Astrocyte of the cerebellum (primary cell): ENCODE measurements at regions of chr17 and their contacts with region 1.

Region 1: DNA sequence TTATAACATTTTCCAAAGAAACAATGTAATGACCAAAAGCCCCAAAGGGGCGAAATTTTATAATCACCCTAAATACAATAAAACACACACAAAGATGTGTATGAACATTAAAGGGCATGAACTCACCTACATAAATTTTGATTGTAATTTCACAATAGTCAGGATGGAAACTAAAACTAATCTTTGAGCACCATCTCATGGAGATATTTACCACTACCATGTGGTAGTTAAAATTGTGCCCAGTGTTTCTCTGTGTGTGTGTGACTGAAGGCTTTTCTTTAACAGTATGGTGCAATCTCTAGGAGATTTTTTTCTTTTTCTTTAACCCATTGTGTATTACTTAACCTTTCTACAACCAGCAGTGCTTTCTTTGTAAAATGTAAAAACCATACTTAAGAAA is 19.7 kb upstream of the MEIOC start:
- DNase-seq: peak; percentile 28
- H3K4me3 ChIP-seq: no peak overlapping the region
- CTCF ChIP-seq: peak; percentile 37

Region 2: GRCh38 chr17:44363613-44364159 is 272.9 kb before region 1 on chr17 and contains the start of gene FAM171A2:
- in situ Hi-C with region 1: loop called (anchors 25 kb)
- DNase-seq: peak; percentile 22
- H3K4me3 ChIP-seq: peak within 1 kb of the TSS; percentile 80
- CTCF ChIP-seq: no peak

Region 3: GRCh38 chr17:44533533-44534246 is 102.9 kb before region 1 on chr17:
- in situ Hi-C with region 1: loop called (anchors 5 kb)
- DNase-seq: peak; percentile 72
- H3K4me3 ChIP-seq: no peak overlapping the region
- CTCF ChIP-seq: peak; percentile 92

Region 4: DNA sequence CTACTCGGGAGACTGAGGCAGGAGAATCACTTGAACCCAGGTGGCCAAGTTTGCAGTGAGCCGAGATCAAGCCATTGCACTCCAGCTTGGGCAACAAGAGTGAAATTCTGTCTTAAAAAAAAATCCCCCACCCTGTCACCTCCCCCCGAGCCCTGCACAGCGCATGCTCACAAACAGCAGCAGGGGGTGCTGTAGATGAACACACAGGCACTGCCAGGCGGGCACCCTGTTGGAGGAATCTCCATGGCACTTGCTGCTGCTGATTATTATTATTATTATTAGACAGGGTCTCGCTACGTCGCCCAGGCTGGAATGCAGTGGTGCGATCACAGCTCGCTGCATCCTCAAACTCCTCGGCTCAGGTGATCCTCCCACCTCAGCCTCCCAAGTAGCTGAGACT is 54.7 kb before region 1 on chr17:
- in situ Hi-C with region 1: loop called (anchors 5 kb)
- DNase-seq: no peak
- H3K4me3 ChIP-seq: no peak overlapping the region
- CTCF ChIP-seq: no peak

Region 5: DNA sequence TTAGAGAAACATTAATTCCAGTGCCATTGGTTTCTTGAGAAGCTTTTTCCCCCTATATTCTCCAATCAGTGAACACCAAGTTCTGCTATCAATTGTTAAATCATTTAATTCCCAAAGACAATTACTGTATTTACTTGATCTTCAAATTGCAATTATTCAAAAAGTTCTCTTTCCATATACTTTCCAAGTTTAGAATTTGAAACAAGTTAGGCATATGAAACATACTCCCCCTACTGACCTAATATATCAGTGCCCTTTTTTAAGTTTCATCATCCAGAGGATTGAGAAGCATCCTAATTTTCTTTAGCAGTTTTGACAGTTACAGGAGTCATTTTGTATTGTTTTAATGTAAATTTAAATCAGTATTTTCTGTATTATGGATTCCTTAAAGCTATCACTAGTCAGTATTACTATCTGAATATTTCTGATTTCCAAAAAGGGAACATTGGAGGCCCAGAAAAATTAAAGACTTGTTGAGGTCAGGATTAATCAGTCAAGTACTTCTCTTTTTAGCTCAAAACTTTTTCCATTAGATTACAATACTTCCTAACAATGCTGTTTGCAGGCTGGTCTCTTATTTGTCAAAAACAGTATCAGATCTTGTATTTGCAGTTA is 36.0 kb after region 1 on chr17:
- in situ Hi-C with region 1: no loop called
- DNase-seq: no peak
- H3K4me3 ChIP-seq: no peak overlapping the region
- CTCF ChIP-seq: peak; percentile 44

Region 6: DNA sequence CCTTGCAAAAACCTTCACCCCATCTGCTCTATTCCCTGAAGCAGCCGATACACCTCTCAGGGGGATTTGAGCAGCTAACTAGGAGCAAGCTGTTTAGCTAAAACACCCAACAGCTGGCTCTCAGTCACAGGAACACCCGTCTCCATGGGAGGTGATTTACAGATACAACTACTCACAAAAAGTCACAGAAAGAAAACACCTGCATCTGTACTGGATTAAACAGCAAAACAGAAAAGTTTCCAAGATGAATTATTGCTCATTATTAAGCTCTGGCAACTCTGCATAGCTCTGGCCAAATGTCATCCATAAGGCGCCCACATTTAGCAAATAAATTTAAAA is 171.2 kb after region 1 on chr17:
- in situ Hi-C with region 1: no loop called
- DNase-seq: no peak
- H3K4me3 ChIP-seq: no peak overlapping the region
- CTCF ChIP-seq: no peak